Activated naive CD4-positive, alpha-beta T cell treated with anti-CD3 and anti-CD28 coated beads, Interleukin-2, amount 10 ng/mL, durations not matched to agents 7 days and 5 days (primary cell): ENCODE measurements at regions of chr5 and their contacts with region 1.

Region 1: DNA sequence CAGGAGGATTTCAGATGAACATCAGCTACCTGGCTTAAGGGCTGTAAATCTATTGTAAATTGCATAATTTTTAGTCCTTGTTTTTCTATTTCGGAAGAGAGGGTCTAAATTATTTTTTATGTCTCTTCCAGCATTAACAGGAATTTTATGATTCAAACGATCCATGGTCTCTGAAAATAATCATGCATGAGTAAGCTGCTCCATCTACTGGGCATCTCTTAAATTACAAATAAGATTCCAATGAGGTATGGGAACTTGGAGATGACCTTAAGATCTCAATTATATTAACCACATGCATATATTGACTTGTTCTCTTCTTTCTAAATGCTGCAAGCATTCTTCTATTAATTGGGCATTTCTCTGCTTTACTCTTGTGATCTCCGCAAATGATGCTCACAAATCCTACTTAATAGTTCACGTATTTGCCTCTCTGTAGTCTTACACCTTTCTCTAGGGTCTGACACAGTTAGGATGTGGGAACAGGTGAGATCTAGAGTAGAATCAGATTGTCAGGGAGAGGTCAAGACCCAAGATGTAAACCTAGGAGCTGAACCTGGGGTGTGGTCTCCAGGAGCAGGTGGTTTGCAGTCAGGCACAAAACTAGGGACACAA is 86.9 kb downstream of the NUDT12 start:
- DNase-seq: no peak
- H3K4me3 Mint-ChIP-seq: no peak overlapping the region
- H3K27ac Mint-ChIP-seq: no peak overlapping the region
- H3K4me1 Mint-ChIP-seq: no peaks in the 10 kb centered on the region
- H3K27me3 Mint-ChIP-seq: no peaks in the 10 kb centered on the region

Region 2: DNA sequence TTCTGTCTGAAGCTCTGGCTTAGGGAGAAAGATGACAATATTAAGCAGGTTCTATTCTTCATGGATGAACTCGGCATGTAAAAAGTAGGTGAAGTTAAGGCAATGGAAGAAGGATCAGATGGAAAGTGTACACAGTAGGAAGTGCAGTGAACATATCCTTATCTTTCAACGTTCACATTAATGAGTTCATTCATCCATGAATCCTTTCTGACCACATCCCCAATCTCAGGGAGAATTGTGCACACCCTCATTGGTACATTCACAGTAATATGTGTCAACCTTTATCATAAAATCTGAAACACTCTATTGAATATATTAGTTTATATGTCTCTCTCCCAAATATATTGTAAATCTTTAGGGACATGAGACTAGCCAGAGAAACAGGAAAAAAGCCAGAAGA is 361.3 kb before region 1 on chr5:
- CTCF ChIA-PET with region 1: no interaction called
- DNase-seq: no peak
- H3K4me3 Mint-ChIP-seq: no peak overlapping the region
- H3K27ac Mint-ChIP-seq: no peak overlapping the region
- H3K4me1 Mint-ChIP-seq: peaks cover 43% of the 10 kb centered on the region
- H3K27me3 Mint-ChIP-seq: no peaks in the 10 kb centered on the region

Region 3: DNA sequence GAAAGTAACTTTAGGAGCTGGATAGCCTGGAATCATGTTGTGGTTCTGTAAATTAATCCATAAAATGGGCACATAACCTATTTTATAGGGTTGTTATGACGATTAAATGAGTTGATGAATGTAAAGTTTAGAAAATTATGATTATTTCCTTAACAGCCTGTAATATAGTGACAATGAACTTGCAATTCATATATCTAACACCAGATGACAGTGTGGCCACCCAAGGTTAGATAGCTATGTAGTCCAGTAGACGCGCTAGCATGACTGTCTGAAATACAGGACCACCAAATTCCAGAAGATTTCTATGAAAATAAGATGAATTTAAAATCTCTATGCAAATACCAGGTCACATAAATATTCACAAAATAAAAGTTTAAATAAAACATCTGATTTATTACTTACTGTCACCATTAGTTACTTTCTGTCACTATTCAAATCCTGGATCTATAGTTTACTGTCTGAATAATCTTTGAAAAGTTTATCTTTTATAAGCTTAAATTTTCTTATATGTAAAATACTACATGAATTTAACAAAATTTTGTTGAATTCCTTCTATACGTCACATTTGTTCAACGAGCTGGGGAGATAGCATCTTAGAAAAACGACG is 243.2 kb before region 1 on chr5:
- CTCF ChIA-PET with region 1: interaction called, 47 read pairs
- DNase-seq: no peak
- H3K4me3 Mint-ChIP-seq: no peak overlapping the region
- H3K27ac Mint-ChIP-seq: no peak overlapping the region
- H3K4me1 Mint-ChIP-seq: no peaks in the 10 kb centered on the region
- H3K27me3 Mint-ChIP-seq: peaks cover 24% of the 10 kb centered on the region

Region 4: DNA sequence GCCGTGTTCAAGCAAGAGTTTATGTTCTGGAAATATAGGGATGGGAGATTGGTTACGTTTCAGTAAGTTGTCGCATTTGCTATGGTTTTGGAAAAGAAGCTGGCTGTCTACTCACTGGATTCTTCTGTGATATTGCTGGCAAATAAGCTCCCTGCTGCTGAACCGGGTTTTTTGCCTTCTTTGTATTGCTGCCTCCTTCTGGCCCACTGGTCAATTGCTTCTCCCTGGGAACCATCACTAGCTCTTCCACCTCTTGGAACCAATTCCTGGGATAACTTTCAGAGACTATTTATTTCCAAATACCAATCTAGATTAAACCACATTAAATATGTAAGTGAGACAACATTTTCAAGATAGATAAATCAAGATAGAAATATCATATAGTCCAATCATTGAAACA is 43.8 kb after region 1 on chr5:
- CTCF ChIA-PET with region 1: no interaction called
- DNase-seq: no peak
- H3K4me3 Mint-ChIP-seq: no peak overlapping the region
- H3K27ac Mint-ChIP-seq: no peak overlapping the region
- H3K4me1 Mint-ChIP-seq: no peaks in the 10 kb centered on the region
- H3K27me3 Mint-ChIP-seq: no peaks in the 10 kb centered on the region

Region 5: GRCh38 chr5:103541114-103541513 is 65.4 kb after region 1 on chr5:
- CTCF ChIA-PET with region 1: no interaction called
- DNase-seq: no peak
- H3K4me3 Mint-ChIP-seq: no peak overlapping the region
- H3K27ac Mint-ChIP-seq: no peak overlapping the region
- H3K4me1 Mint-ChIP-seq: no peaks in the 10 kb centered on the region
- H3K27me3 Mint-ChIP-seq: no peaks in the 10 kb centered on the region